ENCODE measurements at regions of chr2 and their contacts with region 1.

Region 1: GRCh38 chr2:61802548-61802947 is 51.3 kb downstream of the FAM161A start:
- DNase-seq: no peak
- ATAC-seq: no peak
- H3K4me3 Mint-ChIP-seq: no peak overlapping the region
- H3K27ac Mint-ChIP-seq: no peak overlapping the region
- H3K4me1 Mint-ChIP-seq: peaks cover 3% of the 10 kb centered on the region
- H3K27me3 Mint-ChIP-seq: peaks cover 3% of the 10 kb centered on the region; the same call in 1 of the 2 replicates
- CTCF ChIP-seq: no peak

Region 2: DNA sequence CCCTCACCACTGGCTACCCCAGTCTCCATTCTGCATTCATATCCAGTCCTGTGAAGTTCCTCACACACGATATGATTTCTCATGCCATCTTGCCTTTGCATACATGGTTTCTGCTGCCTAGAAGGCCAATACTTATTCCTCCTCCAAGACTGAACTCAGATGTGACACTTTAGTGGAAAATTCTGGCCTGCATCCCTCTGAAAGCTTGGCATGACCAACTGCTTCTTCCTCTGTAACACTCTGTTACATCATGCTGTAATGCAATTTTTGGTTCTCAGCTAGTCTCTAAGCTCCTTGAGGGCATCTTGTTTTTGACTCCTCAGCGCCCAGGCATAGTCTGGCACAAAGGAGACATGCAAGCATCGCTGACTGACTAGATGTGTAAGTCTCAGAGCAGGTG is 38.7 kb after region 1 on chr2:
- CTCF ChIA-PET with region 1: no interaction called
- POLR2A ChIA-PET with region 1: no interaction called
- DNase-seq: no peak
- ATAC-seq: no peak
- H3K4me3 Mint-ChIP-seq: no peak overlapping the region
- H3K27ac Mint-ChIP-seq: no peak overlapping the region
- H3K4me1 Mint-ChIP-seq: no peaks in the 10 kb centered on the region
- H3K27me3 Mint-ChIP-seq: no peaks in the 10 kb centered on the region
- CTCF ChIP-seq: no peak

Region 3: DNA sequence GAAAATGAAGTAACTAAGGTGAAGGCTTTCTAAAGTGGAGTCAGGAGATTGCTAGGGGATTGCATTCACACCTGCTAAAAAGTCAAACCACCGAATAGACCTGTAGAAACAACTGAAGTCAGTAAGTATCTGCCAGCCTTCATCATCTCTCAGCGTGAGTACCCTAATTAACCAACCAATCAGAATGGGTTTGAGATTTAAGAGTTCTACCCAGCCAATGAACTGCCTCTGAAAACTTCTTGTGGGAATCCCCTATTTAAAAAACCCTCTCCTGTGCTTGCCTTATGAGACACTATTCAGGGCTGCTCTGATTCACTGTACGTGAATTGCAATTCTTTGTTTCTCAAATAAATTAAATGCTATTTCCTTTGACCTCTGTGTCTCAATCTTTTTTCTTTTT is 54.7 kb after region 1 on chr2:
- CTCF ChIA-PET with region 1: no interaction called
- POLR2A ChIA-PET with region 1: interaction called, 10 read pairs
- DNase-seq: no peak
- ATAC-seq: no peak
- H3K4me3 Mint-ChIP-seq: no peak overlapping the region
- H3K27ac Mint-ChIP-seq: no peak overlapping the region
- H3K4me1 Mint-ChIP-seq: peaks cover 8% of the 10 kb centered on the region; the same call in 1 of the 2 replicates
- H3K27me3 Mint-ChIP-seq: no peaks in the 10 kb centered on the region
- CTCF ChIP-seq: no peak

Measured in WTC11 (cell line).